ENCODE measurements at regions of chr1 and their contacts with region 1.

Region 1: GRCh38 chr1:111565079-111565478 is 54.5 kb upstream of the RAP1A start:
- DNase-seq: no peak
- ATAC-seq: no peak
- H3K4me3 Mint-ChIP-seq: no peak overlapping the region
- H3K27ac Mint-ChIP-seq: no peak overlapping the region
- H3K4me1 Mint-ChIP-seq: peaks cover 6% of the 10 kb centered on the region
- H3K27me3 Mint-ChIP-seq: no peaks in the 10 kb centered on the region
- CTCF ChIP-seq: no peak

Region 2: DNA sequence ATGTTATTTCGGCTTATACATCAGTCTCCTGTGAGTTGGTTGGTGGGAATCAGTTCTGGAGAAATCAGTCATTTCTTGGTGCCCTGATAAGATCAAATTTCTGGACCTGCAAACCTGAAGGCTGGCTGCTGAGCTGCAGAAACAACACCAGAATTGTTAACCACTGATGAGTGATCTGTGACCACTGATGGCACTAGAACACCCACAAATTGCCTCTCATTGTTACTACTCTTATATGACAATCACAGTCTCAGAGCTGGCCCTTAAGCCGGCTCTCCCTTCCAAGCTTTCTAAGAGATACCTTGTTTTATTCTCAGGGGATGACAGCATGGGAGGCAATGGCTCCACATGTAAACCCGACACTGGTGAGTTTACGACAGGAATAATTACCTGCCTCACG is 89.4 kb before region 1 on chr1:
- CTCF ChIA-PET with region 1: no interaction called
- POLR2A ChIA-PET with region 1: no interaction called
- intact Hi-C with region 1: no loop called
- DNase-seq: no peak
- ATAC-seq: no peak
- H3K4me3 Mint-ChIP-seq: peak overlapping the region; percentile 89
- H3K27ac Mint-ChIP-seq: peak overlapping the region; percentile 98
- H3K4me1 Mint-ChIP-seq: peaks cover 65% of the 10 kb centered on the region
- H3K27me3 Mint-ChIP-seq: no peaks in the 10 kb centered on the region
- CTCF ChIP-seq: no peak

Region 3: DNA sequence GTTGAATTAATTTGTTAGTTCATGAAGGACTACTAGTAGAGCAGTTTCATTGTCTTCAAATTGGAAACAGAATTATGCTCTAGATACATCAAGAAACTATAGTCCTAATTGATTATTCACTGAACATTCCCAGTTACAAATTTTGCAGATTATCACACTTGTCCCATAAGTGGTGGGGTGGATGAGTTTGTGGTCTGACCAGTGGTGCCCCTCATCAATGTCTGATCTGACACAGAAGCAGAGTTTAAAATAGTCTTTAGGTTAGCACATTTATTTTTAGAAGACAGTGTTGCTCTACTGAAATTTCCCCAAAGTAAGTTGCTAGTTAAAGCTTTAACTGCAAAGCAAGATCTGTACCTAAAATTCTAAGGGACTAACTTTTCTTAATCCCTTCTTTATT is 131.3 kb after region 1 on chr1:
- CTCF ChIA-PET with region 1: no interaction called
- POLR2A ChIA-PET with region 1: no interaction called
- intact Hi-C with region 1: loop called (anchors 5 kb)
- DNase-seq: no peak
- ATAC-seq: no peak
- H3K4me3 Mint-ChIP-seq: no peak overlapping the region
- H3K27ac Mint-ChIP-seq: peak overlapping the region; percentile 19
- H3K4me1 Mint-ChIP-seq: peaks cover 50% of the 10 kb centered on the region
- H3K27me3 Mint-ChIP-seq: no peaks in the 10 kb centered on the region
- CTCF ChIP-seq: no peak